MCF 10A (cell line): ENCODE measurements at regions of chr1 and their contacts with region 1.

Region 1: DNA sequence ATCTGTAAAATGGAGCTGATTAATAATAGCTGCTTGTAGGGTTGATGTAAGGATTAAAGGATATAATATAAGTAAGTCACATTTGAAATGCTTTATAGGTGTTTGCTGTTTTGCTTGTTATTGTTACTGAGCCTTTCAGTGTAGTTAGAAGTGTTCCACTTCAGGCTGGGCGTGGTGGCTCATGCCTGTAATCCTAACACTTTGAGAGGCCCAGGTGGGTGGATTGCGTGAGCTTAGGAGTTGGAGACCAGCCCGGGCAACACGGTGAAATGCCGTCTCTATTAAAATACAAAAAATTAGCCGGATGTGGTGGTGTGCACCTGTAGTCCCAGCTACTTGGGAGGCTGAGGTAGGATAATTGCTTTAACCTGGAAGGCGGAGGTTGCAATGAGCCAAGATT is 12.2 kb downstream of the TRNAU1AP start:
- DNase-seq: no peak
- H3K4me3 Mint-ChIP-seq: no peak overlapping the region
- H3K27ac Mint-ChIP-seq: no peak overlapping the region
- H3K4me1 Mint-ChIP-seq: no peaks in the 10 kb centered on the region
- H3K27me3 Mint-ChIP-seq: no peaks in the 10 kb centered on the region
- CTCF ChIP-seq: no peak

Region 2: DNA sequence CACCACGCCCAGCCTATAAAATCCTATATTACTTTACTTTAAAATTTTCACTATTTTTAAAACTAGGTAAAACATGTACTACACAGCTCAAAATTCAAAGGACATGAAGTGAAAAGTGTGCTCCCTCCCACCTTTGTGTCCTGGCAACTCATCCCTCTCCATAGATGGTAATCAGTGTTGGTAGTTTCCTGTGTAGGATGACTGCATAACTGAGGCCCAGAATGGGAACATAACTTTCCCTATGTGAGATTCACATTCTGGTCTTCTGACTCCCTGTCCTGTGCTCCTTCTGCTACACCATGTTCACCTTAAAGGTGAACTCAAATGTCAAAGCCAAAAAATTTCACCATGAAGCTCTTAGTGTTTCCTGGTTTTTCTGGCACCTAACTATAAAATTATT is 566.0 kb before region 1 on chr1:
- CTCF ChIA-PET with region 1: no interaction called
- POLR2A ChIA-PET with region 1: no interaction called
- intact Hi-C with region 1: no loop called
- DNase-seq: no peak
- H3K4me3 Mint-ChIP-seq: no peak overlapping the region
- H3K27ac Mint-ChIP-seq: no peak overlapping the region
- H3K4me1 Mint-ChIP-seq: no peaks in the 10 kb centered on the region
- H3K27me3 Mint-ChIP-seq: no peaks in the 10 kb centered on the region
- CTCF ChIP-seq: no peak

Region 3: GRCh38 chr1:28552758-28553663 is 12.0 kb before region 1 on chr1 and contains the start of gene TRNAU1AP:
- CTCF ChIA-PET with region 1: no interaction called
- POLR2A ChIA-PET with region 1: interaction called, 11 read pairs
- intact Hi-C with region 1: no loop called
- DNase-seq: peak; percentile 95
- H3K4me3 Mint-ChIP-seq: peak within 1 kb of the TSS; percentile 100
- H3K27ac Mint-ChIP-seq: peak within 1 kb of the TSS; percentile 97
- H3K4me1 Mint-ChIP-seq: no peaks in the 10 kb centered on the region
- H3K27me3 Mint-ChIP-seq: no peaks in the 10 kb centered on the region
- CTCF ChIP-seq: no peak
- total RNA-seq, gene TRNAU1AP: 28.2 and 33.4 TPM in 2 replicates